Posterior cingulate gyrus (tissue), 11 donors: ENCODE measurements at regions of chr7 and their contacts with region 1.

Region 1: DNA sequence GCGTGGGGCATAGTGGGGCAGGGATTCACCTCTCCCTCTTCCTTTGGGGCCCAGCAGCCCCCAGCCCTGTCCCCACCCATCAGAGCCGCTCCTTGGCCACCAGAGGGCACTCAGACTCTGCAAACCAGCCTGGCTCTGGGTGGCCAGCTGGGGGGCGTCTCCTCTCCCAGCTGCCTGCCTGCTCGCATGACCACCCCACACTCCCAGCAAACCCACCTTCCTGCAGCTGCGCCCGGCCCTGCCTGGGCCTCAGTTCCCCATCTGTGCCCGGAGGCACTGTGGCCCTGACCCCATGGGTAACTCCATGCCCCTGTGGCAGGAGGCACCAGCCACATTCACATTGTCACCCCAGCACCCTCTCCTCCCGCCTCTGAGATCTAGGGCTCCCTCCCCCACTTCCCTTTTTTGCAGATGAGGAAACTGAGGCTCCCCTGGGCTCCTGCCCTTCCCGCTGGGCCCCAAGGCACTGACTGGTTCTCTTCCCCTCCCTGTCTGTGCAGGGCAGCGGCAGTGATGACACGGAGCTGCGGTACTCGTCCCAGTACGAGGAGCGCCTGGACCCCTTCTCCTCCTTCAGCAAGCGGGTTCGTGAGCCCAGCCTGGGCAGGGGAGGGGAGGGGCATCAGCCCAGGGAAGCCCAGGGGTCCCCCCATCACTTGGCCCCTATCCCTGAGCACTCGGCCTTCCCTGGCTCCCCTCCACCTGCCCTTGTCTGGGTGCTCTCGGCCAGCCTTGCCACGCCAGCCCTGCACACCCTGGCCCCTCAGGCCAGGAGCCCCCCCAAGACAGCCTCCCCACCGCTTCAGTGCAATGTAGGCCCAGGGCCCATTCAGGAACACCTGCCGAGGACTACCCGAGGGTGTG is 6.9 kb upstream of the SH2B2 start:
- DNase-seq: peak in 7 of 10 donors; percentile 46 to 93 (median 55)

Region 2: DNA sequence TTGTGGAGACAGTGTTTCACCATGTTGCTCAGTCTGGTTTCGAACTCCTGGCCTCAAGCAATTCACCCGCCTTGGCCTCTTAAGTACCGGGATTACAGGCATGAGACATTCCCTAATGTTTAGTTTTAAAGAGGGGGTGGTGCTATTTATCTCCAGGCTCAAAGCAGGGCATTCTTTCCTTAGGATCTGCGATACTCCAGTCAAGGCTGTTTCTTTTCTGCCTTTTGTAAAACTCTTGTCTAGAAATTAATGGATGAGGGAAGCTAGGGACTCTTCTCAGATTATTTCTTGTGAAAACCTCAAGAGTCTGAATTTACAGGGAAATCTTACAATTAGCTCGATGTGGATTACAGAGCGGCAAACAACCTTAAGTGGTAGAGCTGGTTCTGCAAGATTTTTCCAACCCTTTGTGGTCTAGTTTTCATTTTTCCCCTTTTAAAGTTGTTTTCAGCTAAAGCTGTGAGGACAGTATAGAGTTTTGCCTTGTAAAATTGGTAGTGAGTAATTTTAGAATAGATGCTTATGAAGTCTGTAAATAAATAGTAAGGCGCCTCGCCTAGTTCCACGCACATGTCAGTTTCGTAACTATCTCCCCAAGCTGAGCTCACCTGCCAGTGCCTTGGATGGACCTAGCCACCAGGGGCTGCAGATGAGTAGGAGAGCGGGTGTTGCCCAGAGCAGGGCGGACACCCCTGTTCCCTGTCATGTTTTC is 409.3 kb before region 1 on chr7:
- intact Hi-C with region 1: no loop called
- DNase-seq: peak in 1 of 10 donors; percentile 32

Region 3: DNA sequence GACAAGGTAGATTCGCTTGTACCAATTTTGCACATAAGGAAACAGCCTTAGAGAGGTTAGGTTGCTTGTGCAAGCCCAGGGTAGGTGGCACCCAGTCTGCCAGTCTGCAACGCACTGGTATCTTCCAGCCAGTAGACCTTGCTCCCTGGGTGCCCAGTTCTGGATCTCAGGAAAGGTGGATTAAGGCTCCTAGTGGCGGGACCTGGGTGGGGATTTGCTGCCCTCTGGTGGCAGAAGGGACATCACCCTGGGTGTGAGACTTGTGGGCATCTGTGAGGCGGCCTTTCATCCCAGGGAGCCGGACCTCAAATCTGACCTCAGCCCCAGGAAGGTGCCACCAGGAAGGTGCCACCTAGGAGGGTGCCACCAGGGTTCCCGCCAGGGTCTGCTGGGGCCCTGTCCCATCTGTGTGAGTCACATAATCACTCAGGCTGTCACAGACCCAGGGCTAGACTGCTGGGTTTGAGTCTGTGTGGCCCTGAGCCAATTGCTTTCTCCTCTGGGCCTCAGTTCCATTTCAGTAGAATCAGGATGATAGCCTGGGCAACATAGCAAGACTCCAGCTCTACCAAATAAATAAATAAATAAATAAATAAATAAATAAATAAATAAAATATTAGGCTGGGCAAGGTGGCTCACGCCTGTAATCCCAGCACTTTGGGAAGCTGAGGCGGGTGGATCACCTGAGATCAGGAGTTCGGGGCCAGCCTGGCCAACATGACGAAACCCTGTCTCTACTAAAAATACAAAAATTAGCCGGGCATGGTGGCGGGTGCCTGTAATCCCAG is 111.1 kb after region 1 on chr7:
- intact Hi-C with region 1: loop called (anchors 2 kb)
- DNase-seq: peak; percentile 69 to 96 (median 84)